Lower leg skin (tissue), 4 donors: ENCODE measurements at regions of chr6 and their contacts with region 1.

Region 1: GRCh38 chr6:19070520-19070919 is 683.4 kb downstream of the RNF144B start:
- DNase-seq: no peak
- H3K4me3 ChIP-seq: no peak overlapping the region
- CTCF ChIP-seq: no peak
- POLR2A ChIP-seq: no peak

Region 2: DNA sequence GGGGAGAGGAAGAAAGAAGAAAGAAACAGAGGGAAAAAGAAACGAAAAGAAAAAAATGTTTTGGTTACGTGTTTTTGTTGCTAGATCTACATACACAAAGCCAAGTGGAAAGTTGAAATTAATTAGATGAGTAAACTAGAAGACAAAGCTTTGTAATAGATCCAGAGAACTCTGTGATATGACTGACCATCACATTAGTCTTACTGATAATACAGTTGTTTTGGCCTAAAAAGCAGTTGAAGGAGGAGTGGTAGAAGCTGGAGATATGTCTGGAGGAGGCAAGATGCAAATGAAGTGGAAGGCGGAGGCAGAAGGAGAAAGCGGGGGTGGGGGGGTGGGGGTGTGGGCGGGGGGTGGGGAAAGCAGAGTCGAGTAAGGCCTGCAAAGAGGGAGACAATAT is 266.6 kb after region 1 on chr6:
- intact Hi-C with region 1: loop called (anchors 5 kb)
- DNase-seq: no peak
- H3K4me3 ChIP-seq: no peak overlapping the region
- CTCF ChIP-seq: no peak
- POLR2A ChIP-seq: no peak